ENCODE measurements at regions of chr5 and their contacts with region 1.

Region 1: GRCh38 chr5:133111299-133111698 is 59.5 kb downstream of the HSPA4 start:
- DNase-seq: peak; percentile 76
- H3K4me3 ChIP-seq: no peak overlapping the region
- H3K27ac ChIP-seq: no peak overlapping the region
- H3K4me1 ChIP-seq: peaks cover 20% of the 10 kb centered on the region
- H3K27me3 ChIP-seq: no peaks in the 10 kb centered on the region
- CTCF ChIP-seq: peak; percentile 88 to 96

Region 2: GRCh38 chr5:133189911-133190310 is 78.6 kb after region 1 on chr5:
- CTCF ChIA-PET with region 1: no interaction called
- dilution Hi-C with region 1: no loop called
- in situ Hi-C with region 1: no loop called
- intact Hi-C with region 1: no loop called
- DNase-seq: no peak
- H3K4me3 ChIP-seq: no peak overlapping the region
- H3K27ac ChIP-seq: no peak overlapping the region
- H3K4me1 ChIP-seq: peaks cover 6% of the 10 kb centered on the region
- H3K27me3 ChIP-seq: no peaks in the 10 kb centered on the region
- CTCF ChIP-seq: no peak

Region 3: GRCh38 chr5:133247881-133248624 is 136.8 kb after region 1 on chr5:
- CTCF ChIA-PET with region 1: no interaction called
- dilution Hi-C with region 1: no loop called
- in situ Hi-C with region 1: no loop called
- intact Hi-C with region 1: loop called (anchors 1 kb)
- DNase-seq: no peak
- H3K4me3 ChIP-seq: no peak overlapping the region
- H3K27ac ChIP-seq: no peak overlapping the region
- H3K4me1 ChIP-seq: peaks cover 33% of the 10 kb centered on the region
- H3K27me3 ChIP-seq: no peaks in the 10 kb centered on the region
- CTCF ChIP-seq: peak in 1 of 2 donors; percentile 11

Region 4: DNA sequence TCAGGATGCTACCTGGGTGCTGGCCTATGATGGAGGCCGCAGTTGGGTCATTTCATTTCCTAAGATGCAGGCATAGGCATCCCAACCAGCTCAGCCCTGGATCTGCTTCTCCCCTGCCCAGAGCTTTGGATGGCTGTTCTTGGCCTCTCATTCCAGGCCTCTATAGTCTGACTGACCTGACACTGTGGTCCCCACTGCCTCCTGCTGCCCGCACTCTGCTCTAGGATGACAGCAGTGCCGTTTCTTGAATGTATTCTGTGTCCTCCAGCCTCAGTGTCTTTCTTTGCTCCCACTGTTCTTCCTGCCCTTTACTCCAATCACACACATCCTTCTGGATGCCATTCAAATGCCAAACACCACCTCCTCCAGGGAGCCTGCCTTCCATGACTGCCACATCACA is 176.2 kb after region 1 on chr5:
- CTCF ChIA-PET with region 1: interaction called, 4 read pairs
- dilution Hi-C with region 1: no loop called
- in situ Hi-C with region 1: loop called in 1 of 2 experiments (anchors 5 kb)
- intact Hi-C with region 1: loop called (anchors 1 kb)
- DNase-seq: no peak
- H3K4me3 ChIP-seq: no peak overlapping the region
- H3K27ac ChIP-seq: no peak overlapping the region
- H3K4me1 ChIP-seq: peaks cover 59% of the 10 kb centered on the region
- H3K27me3 ChIP-seq: no peaks in the 10 kb centered on the region
- CTCF ChIP-seq: peak; percentile 44 to 69

Region 5: GRCh38 chr5:133364936-133365707 is 253.8 kb after region 1 on chr5:
- CTCF ChIA-PET with region 1: no interaction called
- dilution Hi-C with region 1: no loop called
- in situ Hi-C with region 1: no loop called
- intact Hi-C with region 1: loop called (anchors 1 kb)
- DNase-seq: no peak
- H3K4me3 ChIP-seq: no peak overlapping the region
- H3K27ac ChIP-seq: no peak overlapping the region
- H3K4me1 ChIP-seq: peaks cover 4% of the 10 kb centered on the region
- H3K27me3 ChIP-seq: no peaks in the 10 kb centered on the region
- CTCF ChIP-seq: peak; percentile 41 to 52

Region 6: GRCh38 chr5:133610489-133611356 is 499.4 kb after region 1 on chr5:
- CTCF ChIA-PET with region 1: no interaction called
- dilution Hi-C with region 1: no loop called
- in situ Hi-C with region 1: no loop called
- intact Hi-C with region 1: loop called (anchors 5 kb)
- DNase-seq: peak; percentile 47
- H3K4me3 ChIP-seq: no peak overlapping the region
- H3K27ac ChIP-seq: no peak overlapping the region
- H3K4me1 ChIP-seq: peaks cover 12% of the 10 kb centered on the region
- H3K27me3 ChIP-seq: peaks cover 43% of the 10 kb centered on the region
- CTCF ChIP-seq: peak; percentile 11 to 59

Region 7: DNA sequence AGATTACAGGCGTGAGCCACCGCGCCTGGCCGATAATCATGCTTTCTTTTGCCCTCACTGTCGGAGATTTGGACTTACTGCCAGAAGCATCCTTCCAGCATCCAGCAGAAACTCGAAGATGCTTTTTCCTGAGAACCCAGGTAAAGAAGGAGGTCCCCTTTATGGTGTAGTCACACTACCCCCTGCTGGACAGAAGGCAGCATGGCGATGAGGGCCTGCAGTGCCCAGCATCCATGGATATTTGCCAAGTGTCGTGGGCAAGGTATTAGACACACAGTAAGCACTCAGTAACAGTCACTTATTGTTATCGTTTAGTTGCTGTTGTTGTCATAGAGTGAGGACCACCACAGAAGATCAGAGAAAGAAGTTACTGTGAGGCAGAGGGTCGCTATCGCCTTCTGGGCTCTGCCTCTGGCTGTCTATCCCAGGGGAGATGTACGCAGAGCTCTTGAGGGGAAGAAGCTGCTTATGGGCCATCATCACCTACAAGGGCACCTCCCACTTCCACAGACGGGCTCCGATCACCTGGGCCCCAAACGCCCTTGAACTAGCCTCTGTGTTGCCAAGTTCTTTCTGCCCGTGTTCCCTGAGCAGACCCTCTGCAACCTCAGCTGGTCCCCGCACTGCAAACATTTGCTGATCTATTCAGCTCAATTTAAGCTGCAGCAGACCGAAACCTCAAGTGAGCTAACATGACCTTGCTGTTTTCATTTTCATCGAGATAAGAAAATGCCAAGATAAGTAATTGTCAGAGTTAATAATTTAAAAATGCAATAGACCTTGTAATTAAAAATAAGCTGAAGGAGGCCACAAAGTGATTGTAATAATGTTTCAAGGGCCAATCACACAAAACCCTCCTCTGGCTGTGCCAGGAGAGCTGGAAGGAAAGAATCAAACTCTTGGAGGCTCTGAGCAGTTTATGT is 833.2 kb after region 1 on chr5:
- CTCF ChIA-PET with region 1: no interaction called
- dilution Hi-C with region 1: no loop called
- in situ Hi-C with region 1: no loop called
- intact Hi-C with region 1: loop called (anchors 1 kb)
- DNase-seq: peak; percentile 44
- H3K4me3 ChIP-seq: no peak overlapping the region
- H3K27ac ChIP-seq: no peak overlapping the region
- H3K4me1 ChIP-seq: no peaks in the 10 kb centered on the region
- H3K27me3 ChIP-seq: no peaks in the 10 kb centered on the region
- CTCF ChIP-seq: peak; percentile 71 to 82